CD8-positive, alpha-beta T cell (primary cell): ENCODE measurements at regions of chr7 and their contacts with region 1.

Region 1: DNA sequence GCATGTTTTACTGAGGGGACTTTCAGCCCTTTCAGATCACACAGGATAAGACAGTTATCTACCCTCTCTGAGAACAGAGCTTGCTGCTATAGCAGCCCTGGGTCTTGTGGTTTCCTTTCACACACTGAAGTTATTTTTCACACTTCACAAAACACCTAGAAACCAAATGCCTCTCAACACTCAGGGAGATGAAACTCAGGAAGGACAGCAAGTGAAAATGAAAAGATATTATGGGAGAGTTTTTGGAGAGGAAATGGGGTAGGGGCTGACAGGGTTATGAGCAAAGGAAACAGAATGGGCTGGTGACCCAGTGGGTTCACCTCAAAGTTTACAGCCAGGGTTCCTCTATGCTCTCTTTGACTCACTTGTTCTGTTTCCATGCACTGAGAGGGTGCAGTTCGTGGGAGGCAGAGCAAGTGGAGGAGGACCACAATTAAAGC is 17.0 kb upstream of the GIMAP2 start:
- DNase-seq: peak in 6 of 9 experiments; percentile 60 to 94 (median 72)
- ATAC-seq: peak; percentile 76
- H3K4me3 ChIP-seq: peak overlapping the region in 1 of 2 experiments; percentile 17
- H3K4me3 Mint-ChIP-seq: peak overlapping the region; percentile 36
- H3K27ac ChIP-seq: peak overlapping the region; percentile 63 to 95
- H3K27ac Mint-ChIP-seq: peak overlapping the region; percentile 97
- H3K4me1 ChIP-seq: peaks cover 88% of the 10 kb centered on the region
- H3K4me1 Mint-ChIP-seq: peaks cover 90% of the 10 kb centered on the region
- H3K27me3 ChIP-seq: no peaks in the 10 kb centered on the region
- H3K27me3 Mint-ChIP-seq: no peaks in the 10 kb centered on the region
- CTCF ChIP-seq: no peak

Region 2: DNA sequence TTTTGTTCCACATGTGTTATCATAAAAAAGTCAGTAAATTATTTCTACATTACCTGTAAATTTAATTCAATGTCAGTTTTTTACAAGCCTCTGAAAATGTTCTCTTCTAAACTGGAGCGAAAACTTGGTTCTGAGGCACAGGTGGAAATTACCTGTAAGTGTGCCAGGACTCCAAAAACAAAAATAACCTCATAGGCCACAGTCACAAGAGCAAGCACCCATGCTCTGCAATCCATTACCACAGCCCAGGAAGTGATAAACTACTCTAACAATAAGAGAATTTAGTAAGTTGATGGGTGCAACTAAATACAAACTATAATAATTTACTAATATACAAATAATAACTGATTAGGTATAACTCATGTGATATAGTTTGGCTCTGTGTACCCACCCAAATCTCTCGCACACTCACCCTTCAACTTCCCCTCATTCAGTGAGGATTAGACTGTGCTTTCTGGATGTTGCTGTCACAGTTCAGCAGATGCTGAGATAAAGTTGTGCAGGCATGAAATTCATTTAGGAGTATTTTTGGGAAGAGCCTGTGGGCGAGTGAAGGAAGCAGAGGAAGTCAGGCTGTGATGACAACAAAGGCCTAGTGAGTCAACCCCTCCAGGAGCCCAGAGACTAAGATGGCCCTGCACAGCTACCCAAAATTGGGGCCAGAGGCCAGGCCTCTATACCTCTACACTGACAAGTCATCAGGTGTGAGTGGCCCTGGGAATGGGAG is 20.0 kb before region 1 on chr7:
- CTCF ChIA-PET with region 1: interaction called, 3 read pairs
- POLR2A ChIA-PET with region 1: interaction called, 5 read pairs
- intact Hi-C with region 1: loop called in 1 of 2 experiments (anchors 2 kb)
- DNase-seq: peak in 2 of 9 experiments; percentile 62 to 74
- ATAC-seq: peak; percentile 85
- H3K4me3 ChIP-seq: no peak overlapping the region
- H3K4me3 Mint-ChIP-seq: peak overlapping the region; percentile 12
- H3K27ac ChIP-seq: peak overlapping the region in 1 of 2 experiments; percentile 17
- H3K27ac Mint-ChIP-seq: peak overlapping the region; percentile 74
- H3K4me1 ChIP-seq: peaks cover 50% of the 10 kb centered on the region
- H3K4me1 Mint-ChIP-seq: peaks cover 64% of the 10 kb centered on the region
- H3K27me3 ChIP-seq: no peaks in the 10 kb centered on the region
- H3K27me3 Mint-ChIP-seq: no peaks in the 10 kb centered on the region
- CTCF ChIP-seq: no peak

Region 3: DNA sequence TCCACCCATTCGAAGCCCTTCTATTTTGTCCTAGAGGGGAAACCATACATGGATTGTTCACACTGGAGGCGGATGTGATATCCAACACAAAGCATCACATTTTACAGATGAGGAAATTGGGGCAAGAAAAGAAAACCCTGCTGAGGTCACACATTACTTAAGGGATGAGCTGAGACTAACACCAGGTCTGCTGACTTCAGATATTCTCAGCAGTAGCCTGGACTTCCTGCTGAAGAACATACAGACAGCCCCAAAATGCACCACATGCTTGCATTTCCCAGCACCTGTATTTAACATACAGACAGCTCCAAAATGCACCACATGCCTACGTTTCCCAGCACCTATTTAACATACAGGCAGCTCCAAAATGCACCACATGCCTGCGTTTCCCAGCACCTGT is 79.9 kb after region 1 on chr7:
- CTCF ChIA-PET with region 1: interaction called, 4 read pairs
- POLR2A ChIA-PET with region 1: interaction called, 11 read pairs
- intact Hi-C with region 1: no loop called
- DNase-seq: peak in 2 of 9 experiments; percentile 44 to 68
- ATAC-seq: peak; percentile 52
- H3K4me3 ChIP-seq: no peak overlapping the region
- H3K4me3 Mint-ChIP-seq: peak overlapping the region; percentile 20
- H3K27ac ChIP-seq: peak overlapping the region; percentile 11 to 65
- H3K27ac Mint-ChIP-seq: peak overlapping the region; percentile 97
- H3K4me1 ChIP-seq: peaks cover 94% of the 10 kb centered on the region
- H3K4me1 Mint-ChIP-seq: peaks cover 91% of the 10 kb centered on the region
- H3K27me3 ChIP-seq: no peaks in the 10 kb centered on the region
- H3K27me3 Mint-ChIP-seq: no peaks in the 10 kb centered on the region
- CTCF ChIP-seq: no peak

Region 4: GRCh38 chr7:150830937-150831336 is 162.4 kb after region 1 on chr7:
- CTCF ChIA-PET with region 1: no interaction called
- POLR2A ChIA-PET with region 1: no interaction called
- intact Hi-C with region 1: no loop called
- DNase-seq: no peak
- ATAC-seq: no peak
- H3K4me3 ChIP-seq: no peak overlapping the region
- H3K4me3 Mint-ChIP-seq: no peak overlapping the region
- H3K27ac ChIP-seq: no peak overlapping the region
- H3K27ac Mint-ChIP-seq: no peak overlapping the region
- H3K4me1 ChIP-seq: no peaks in the 10 kb centered on the region
- H3K4me1 Mint-ChIP-seq: no peaks in the 10 kb centered on the region
- H3K27me3 ChIP-seq: peaks cover 0 to 4% of the 10 kb centered on the region in 2 experiments
- H3K27me3 Mint-ChIP-seq: peaks cover 45% of the 10 kb centered on the region
- CTCF ChIP-seq: no peak

Region 5: GRCh38 chr7:151252961-151253711 is 584.6 kb after region 1 on chr7:
- CTCF ChIA-PET with region 1: no interaction called
- POLR2A ChIA-PET with region 1: no interaction called
- intact Hi-C with region 1: no loop called
- DNase-seq: no peak
- ATAC-seq: no peak
- H3K4me3 ChIP-seq: no peak overlapping the region
- H3K4me3 Mint-ChIP-seq: peak overlapping the region; percentile 72
- H3K27ac ChIP-seq: no peak overlapping the region
- H3K27ac Mint-ChIP-seq: no peak overlapping the region
- H3K4me1 ChIP-seq: peaks cover 24% of the 10 kb centered on the region
- H3K4me1 Mint-ChIP-seq: peaks cover 31% of the 10 kb centered on the region
- H3K27me3 ChIP-seq: peaks cover 0 to 13% of the 10 kb centered on the region in 2 experiments
- H3K27me3 Mint-ChIP-seq: peaks cover 22% of the 10 kb centered on the region
- CTCF ChIP-seq: no peak

Region 6: DNA sequence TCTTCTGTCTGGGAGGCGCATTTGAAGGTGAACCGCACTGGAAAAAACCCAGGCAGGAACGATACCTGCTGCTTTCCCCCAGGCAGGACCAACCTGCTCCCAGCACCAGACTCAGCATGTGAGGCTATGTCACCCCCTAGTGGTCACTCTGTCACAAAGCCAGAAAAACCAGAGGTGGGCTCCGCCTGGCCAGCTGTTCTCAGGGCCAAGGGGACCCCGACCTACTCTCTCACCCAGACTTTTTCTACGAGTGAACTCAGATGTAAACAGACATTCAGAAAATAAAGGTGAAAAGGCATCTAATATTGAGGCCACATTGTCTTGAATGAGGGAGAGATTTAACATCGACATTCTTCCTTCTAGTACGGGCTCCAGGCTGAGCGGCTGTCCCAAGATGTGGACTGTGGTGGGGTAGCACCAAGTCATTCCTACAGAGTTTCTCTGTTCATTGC is 1091.1 kb after region 1 on chr7:
- CTCF ChIA-PET with region 1: no interaction called
- POLR2A ChIA-PET with region 1: no interaction called
- intact Hi-C with region 1: no loop called
- DNase-seq: peak in 8 of 9 experiments; percentile 31 to 81 (median 66)
- ATAC-seq: peak; percentile 62
- H3K4me3 ChIP-seq: no peak overlapping the region
- H3K4me3 Mint-ChIP-seq: no peak overlapping the region
- H3K27ac ChIP-seq: no peak overlapping the region
- H3K27ac Mint-ChIP-seq: peak overlapping the region; percentile 41
- H3K4me1 ChIP-seq: peaks cover 25% of the 10 kb centered on the region
- H3K4me1 Mint-ChIP-seq: peaks cover 29% of the 10 kb centered on the region
- H3K27me3 ChIP-seq: no peaks in the 10 kb centered on the region
- H3K27me3 Mint-ChIP-seq: no peaks in the 10 kb centered on the region
- CTCF ChIP-seq: peak; percentile 95